BJ (cell line): ENCODE measurements at regions of chr11 and their contacts with region 1.

Region 1: DNA sequence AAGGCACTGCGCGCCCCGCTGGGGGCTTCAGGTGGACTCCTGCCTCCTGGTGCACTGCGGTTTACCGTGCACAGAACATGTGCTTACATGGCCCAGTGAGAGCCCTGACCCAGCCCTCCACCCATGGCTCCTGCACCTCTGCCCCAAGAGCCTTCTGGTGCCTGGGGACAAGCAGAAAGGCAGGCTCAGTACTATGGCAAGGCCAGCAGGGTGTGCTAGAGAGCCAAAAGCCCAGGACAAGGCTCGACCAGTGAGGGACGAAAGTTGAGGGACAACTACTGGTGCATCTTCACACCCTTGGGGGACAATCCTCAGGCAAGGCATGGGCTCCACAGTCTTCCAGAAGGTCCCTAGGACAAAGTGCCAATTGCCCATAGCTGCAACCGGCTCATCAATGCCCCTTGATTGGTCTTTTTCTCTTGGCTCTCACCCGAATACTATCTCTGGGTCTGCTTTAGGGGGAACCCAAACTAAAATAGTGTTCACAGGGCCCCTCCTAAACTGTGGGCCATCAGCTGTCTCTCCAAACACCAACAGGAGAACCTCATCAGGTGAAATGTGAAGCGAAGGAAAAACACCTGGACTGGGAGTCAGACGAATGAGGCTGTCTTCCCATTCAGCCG is 13.5 kb downstream of the PGA5 start:
- DNase-seq: no peak
- H3K4me3 ChIP-seq: no peak overlapping the region
- H3K27me3 ChIP-seq: peaks cover 2% of the 10 kb centered on the region; the same call in 1 of the 2 replicates
- CTCF ChIP-seq: peak; percentile 97

Region 2: GRCh38 chr11:61266602-61267001 is 12.1 kb after region 1 on chr11:
- CTCF ChIA-PET with region 1: interaction called, 22 read pairs
- POLR2A ChIA-PET with region 1: no interaction called
- DNase-seq: no peak
- H3K4me3 ChIP-seq: no peak overlapping the region
- H3K27me3 ChIP-seq: no peaks in the 10 kb centered on the region
- CTCF ChIP-seq: no peak

Region 3: DNA sequence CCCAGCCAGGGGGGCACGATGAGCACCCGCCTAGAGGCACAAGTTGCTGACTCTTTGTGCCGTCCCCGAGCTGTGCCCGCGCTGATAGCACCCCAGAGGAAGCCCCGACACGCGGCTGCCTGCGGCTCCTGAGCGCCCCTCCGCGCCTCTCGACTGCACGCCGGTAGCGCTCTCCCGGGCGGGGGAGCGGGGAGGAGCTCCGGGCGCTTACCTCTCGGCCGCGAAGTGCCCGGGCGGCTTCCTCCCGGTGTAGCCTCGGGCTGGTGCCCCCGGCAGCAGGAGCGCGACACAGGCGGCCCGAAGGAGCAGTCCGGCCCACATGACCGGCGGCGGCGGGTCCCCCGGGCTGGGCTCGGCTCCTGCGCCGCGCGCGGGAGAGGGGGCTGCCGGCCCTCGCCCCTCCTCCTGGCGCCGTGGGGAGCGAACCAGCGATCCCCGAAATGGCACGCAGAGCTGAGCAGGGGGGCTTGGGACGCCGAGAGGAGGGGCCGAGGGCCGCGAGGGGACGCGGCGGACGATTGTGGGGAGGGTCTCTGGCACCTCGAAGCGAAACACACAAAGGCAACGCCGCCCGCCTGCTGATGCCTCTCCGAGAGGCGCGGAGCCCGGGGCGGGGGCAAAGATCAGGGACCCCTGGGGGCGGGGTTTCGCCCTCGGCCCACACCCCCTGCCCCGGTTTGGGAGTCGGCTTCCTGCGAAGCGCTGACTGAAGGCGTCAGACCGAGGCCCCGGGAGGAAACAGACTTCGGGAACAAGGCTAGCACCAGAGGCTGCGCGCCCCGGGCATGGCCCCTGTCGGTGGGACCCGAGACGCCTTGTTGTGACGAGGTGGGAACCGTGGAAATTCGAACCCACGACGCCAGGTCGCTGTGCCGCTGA is 40.4 kb after region 1 on chr11 and contains the start of gene VWCE:
- CTCF ChIA-PET with region 1: interaction called, 16 read pairs
- POLR2A ChIA-PET with region 1: no interaction called
- DNase-seq: no peak
- H3K4me3 ChIP-seq: peak within 1 kb of the TSS; percentile 44
- H3K27me3 ChIP-seq: no peaks in the 10 kb centered on the region
- CTCF ChIP-seq: peak; percentile 49
- polyA plus RNA-seq, gene VWCE: 0.96 and 1.4 TPM in 2 replicates

Region 4: DNA sequence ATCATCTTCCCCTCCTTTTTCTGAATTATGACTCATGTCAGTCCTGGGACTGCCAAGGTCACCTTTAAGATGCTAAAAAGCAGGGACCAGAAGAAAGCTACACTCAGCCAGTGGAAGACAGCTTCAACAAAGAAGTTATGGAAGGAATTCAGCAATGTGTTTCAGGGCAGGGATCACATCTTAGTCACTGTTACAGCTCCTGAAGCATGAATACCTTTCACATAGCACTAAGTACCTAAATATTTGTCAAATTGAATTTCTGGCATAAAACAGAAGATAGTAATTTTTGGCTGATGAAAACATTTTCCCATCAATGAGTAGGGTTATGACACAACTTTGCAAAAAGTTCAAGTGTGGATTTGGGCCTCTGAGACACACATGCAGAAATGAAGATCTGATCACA is 73.2 kb after region 1 on chr11:
- CTCF ChIA-PET with region 1: interaction called, 13 read pairs
- POLR2A ChIA-PET with region 1: no interaction called
- DNase-seq: peak; percentile 36
- H3K4me3 ChIP-seq: no peak overlapping the region
- H3K27me3 ChIP-seq: no peaks in the 10 kb centered on the region
- CTCF ChIP-seq: no peak